SK-N-SH (cell line): ENCODE measurements at regions of chr6 and their contacts with region 1.

Region 1: DNA sequence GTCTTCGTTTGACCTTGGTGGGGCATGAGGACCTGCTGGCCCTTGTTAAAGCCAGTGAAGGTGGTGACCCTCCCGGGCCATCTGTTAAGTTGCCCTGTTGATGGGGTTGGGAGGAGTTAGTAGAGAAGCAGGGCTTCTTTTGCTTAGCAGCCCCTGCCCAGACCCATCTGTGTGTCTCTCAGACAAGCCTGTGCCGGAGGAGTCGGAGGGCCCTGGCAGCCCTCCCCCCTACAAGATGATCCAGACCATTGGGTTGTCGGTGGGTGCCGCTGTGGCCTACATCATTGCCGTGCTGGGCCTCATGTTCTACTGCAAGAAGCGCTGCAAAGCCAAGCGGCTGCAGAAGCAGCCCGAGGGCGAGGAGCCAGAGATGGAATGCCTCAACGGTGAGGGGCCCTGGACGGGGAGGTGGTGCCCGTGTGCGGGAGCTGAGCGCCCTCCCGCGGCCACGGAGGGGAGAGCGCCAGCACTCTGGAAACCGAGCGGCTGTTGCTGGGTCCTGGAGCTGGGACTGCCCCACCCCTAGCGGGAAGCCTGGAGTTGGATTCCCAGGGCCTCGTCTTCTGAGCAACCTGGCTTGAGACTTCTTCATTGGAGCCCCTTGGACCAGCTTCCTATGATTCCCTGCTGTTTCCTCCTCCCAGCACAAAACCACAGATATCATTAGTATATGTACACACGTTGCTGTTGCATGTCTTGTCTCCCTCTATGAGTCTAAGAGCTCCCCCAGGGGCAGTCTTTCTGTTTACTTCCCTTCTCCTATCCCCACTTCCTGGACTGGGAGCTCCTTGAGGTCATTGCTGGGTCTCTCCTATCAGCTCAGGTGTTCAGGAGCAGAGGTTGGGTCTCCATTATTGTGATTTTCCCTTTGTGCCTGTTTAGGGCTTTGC is 27.6 kb upstream of the SRF start:
- DNase-seq: peak; percentile 97
- H3K4me3 ChIP-seq: peak overlapping the region in 1 of 2 experiments; percentile 27; a peak in 1 of 4 replicates
- H3K27ac ChIP-seq: peak overlapping the region; percentile 39 to 77; a peak in 3 of 4 replicates
- H3K4me1 ChIP-seq: peaks cover 8 to 11% of the 10 kb centered on the region in 2 experiments; a peak in 3 of 4 replicates
- H3K27me3 ChIP-seq: no peaks in the 10 kb centered on the region
- CTCF ChIP-seq: peak; percentile 97
- EP300 ChIP-seq: no peak
- RAD21 ChIP-seq: peak; percentile 99

Region 2: DNA sequence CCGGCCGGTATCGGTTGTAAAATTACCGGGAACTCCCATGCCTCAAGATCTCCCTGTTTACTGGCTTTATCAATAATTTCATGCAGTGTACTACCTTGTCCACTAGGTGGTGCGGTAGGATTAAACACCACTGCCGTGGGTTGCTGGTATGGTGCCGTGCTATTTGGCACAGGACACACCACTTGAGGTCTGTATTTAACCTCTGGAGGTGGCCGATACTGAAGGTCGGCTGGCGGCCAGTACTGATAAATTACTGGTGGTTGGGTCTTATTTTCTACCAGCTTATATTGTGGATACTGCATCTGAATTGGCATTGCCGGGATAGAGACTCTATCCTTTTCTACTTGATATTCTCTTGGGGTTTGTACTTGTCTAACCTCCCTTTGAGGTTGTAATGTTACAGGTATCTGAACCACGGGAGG is 241.9 kb before region 1 on chr6:
- CTCF ChIA-PET with region 1: interaction called, 13 read pairs
- POLR2A ChIA-PET with region 1: no interaction called
- DNase-seq: peak; percentile 72
- H3K4me3 ChIP-seq: peak overlapping the region in 1 of 2 experiments; percentile 20; a peak in 1 of 4 replicates
- H3K27ac ChIP-seq: no peak overlapping the region
- H3K4me1 ChIP-seq: peaks cover 0 to 9% of the 10 kb centered on the region in 2 experiments; a peak in 2 of 4 replicates
- H3K27me3 ChIP-seq: no peaks in the 10 kb centered on the region
- CTCF ChIP-seq: peak; percentile 89
- EP300 ChIP-seq: no peak
- RAD21 ChIP-seq: peak; percentile 97

Region 3: DNA sequence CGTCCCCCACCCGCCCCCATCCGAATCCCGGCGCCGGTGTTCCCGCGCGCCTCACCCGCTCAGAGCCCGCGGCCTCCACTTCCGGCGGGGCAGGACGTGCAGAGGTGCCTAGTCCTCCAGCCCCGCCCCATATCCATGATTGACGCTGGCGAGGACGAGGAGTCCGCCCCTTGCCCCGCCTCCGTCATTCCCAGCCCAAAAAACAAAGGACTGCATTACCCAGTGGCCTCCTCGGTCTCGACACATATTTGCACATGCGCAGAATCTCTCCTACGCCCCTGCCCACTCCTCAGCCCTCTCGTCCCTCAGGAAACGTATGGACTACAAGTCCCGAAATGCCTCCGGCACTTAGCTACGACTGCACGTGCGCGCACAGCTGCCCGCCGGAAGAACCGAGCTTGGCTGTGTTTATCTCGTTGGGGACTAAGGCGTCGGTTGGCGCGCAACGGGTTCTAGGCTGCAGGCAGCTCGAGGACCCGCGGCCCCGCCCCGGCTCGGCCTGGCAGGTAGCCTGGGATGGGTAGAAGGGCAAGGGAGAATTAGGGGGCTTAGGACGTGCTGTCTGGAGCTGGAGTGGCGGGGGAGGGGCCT is 129.5 kb before region 1 on chr6 and contains the starts of genes KLHDC3 and MEA1:
- CTCF ChIA-PET with region 1: interaction called, 26 read pairs
- POLR2A ChIA-PET with region 1: interaction called, 3 read pairs
- DNase-seq: peak; percentile 98
- H3K4me3 ChIP-seq: peak within 1 kb of the TSS; percentile 47 to 85
- H3K27ac ChIP-seq: peak within 1 kb of the TSS; percentile 57 to 75
- H3K4me1 ChIP-seq: peaks cover 3 to 36% of the 10 kb centered on the region in 2 experiments; a peak in 3 of 4 replicates
- H3K27me3 ChIP-seq: no peaks in the 10 kb centered on the region
- CTCF ChIP-seq: no peak
- EP300 ChIP-seq: no peak
- RAD21 ChIP-seq: no peak
- polyA plus RNA-seq, gene KLHDC3: 59.1 and 74.1 TPM in 2 replicates
- polyA plus RNA-seq, gene MEA1: 160 and 171 TPM in 2 replicates

Region 4: GRCh38 chr6:43070028-43070632 is 73.3 kb before region 1 on chr6:
- CTCF ChIA-PET with region 1: interaction called, 58 read pairs
- POLR2A ChIA-PET with region 1: interaction called, 4 read pairs
- DNase-seq: peak; percentile 80
- H3K4me3 ChIP-seq: no peak overlapping the region
- H3K27ac ChIP-seq: no peak overlapping the region
- H3K4me1 ChIP-seq: peaks cover 0 to 3% of the 10 kb centered on the region in 2 experiments; a peak in 1 of 4 replicates
- H3K27me3 ChIP-seq: no peaks in the 10 kb centered on the region
- CTCF ChIP-seq: peak; percentile 79
- EP300 ChIP-seq: no peak
- RAD21 ChIP-seq: peak; percentile 84

Region 5: GRCh38 chr6:43129434-43130194 is 13.9 kb before region 1 on chr6:
- CTCF ChIA-PET with region 1: interaction called, 56 read pairs
- POLR2A ChIA-PET with region 1: no interaction called
- DNase-seq: peak; percentile 84
- H3K4me3 ChIP-seq: no peak overlapping the region
- H3K27ac ChIP-seq: peak overlapping the region; percentile 75 to 99
- H3K4me1 ChIP-seq: peaks cover 25 to 38% of the 10 kb centered on the region in 2 experiments; a peak in 3 of 4 replicates
- H3K27me3 ChIP-seq: no peaks in the 10 kb centered on the region
- CTCF ChIP-seq: peak; percentile 75
- EP300 ChIP-seq: no peak
- RAD21 ChIP-seq: peak; percentile 90

Region 6: DNA sequence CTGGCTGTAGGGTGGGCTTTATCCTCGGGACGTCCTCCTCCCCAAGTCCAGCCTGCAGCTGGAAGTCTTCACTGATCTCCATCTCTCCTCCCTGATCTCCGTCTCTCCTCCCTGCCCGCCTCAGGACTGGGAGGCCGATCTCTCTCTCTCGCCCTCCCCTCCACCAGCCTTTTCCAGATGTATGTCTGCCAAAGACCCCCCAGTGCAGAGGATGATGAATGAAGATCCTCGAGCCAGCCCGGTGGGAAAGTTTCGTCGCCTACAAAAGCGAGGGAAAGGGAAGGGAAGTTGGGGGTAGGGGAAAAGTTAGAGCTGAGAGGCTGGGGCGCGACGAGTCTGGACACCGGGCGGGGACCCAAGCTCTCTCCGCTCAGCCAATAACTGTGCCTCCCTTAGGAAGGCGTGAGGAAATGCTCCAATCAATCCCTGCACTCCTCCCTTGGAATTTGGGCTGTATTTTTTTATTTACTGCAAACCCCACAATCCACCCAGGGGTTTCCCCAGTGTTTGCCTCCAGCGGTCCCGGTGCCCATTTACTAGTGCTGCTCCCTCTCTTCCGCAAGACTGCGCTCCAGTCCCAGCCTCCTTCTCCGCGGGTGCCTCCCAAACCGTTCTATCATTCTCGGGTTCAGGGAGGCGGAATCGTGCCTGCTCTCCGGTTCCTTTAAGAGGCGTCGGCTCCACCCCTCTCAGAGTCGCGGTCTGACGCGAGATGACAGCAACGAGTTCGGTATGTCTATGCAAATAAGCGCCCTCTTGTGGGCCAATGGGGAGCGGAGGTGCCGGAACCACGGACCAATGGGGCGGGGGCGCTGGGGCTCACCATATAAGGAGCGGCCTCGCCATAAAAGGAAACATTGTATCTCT is 27.2 kb after region 1 on chr6 and contains the start of gene SRF:
- CTCF ChIA-PET with region 1: interaction called, 33 read pairs
- POLR2A ChIA-PET with region 1: interaction called, 3 read pairs
- DNase-seq: peak; percentile 78
- H3K4me3 ChIP-seq: peak within 1 kb of the TSS; percentile 65 to 84
- H3K27ac ChIP-seq: peak within 1 kb of the TSS; percentile 87 to 91
- H3K4me1 ChIP-seq: peaks cover 20 to 30% of the 10 kb centered on the region in 2 experiments
- H3K27me3 ChIP-seq: no peaks in the 10 kb centered on the region
- CTCF ChIP-seq: no peak
- EP300 ChIP-seq: no peak
- RAD21 ChIP-seq: 0 out of 2 replicates have a peak, but pooled peaks have one; percentile 6
- polyA plus RNA-seq, gene SRF: 31.7 and 33.8 TPM in 2 replicates